ENCODE measurements at regions of chr3 and their contacts with region 1.

Region 1: GRCh38 chr3:182490596-182491491 is 302.5 kb upstream of the ATP11B start:
- DNase-seq: peak; percentile 62
- H3K4me3 Mint-ChIP-seq: no peak overlapping the region
- H3K27ac Mint-ChIP-seq: no peak overlapping the region
- H3K4me1 Mint-ChIP-seq: no peaks in the 10 kb centered on the region
- H3K27me3 Mint-ChIP-seq: no peaks in the 10 kb centered on the region
- CTCF ChIP-seq: peak; percentile 36

Region 2: DNA sequence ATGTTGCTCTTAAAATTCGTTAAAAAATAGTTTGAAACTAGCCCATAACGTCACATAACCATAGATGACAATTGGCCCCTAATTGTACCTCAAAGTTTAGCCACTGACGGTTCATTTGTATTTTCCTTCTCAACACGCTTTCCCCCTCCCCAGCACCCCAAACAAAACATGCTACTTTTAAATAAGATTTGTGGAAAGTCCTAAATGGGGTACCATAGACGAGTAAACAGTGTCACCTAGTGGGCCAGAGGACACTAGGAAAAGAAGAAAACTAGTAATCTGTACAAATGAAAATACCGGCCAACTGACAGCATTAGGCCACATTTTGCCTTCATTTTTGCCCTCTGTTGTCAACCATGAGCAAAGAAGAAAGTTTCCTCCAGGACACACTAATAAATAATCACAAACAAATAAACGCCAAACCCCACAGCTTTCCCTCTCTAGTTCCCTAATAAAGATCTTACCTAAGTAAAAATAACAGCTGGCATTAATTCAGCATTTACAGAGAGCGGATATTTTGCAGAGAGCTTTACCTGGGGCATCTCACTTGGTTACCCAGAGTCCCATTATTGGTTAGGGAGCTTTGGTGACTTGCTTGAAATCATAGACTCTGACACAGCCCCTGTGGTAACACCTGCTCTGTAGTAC is 127.4 kb after region 1 on chr3:
- CTCF ChIA-PET with region 1: interaction called, 3 read pairs
- POLR2A ChIA-PET with region 1: no interaction called
- intact Hi-C with region 1: loop called (anchors 5 kb)
- DNase-seq: peak; percentile 47
- H3K4me3 Mint-ChIP-seq: no peak overlapping the region
- H3K27ac Mint-ChIP-seq: peak overlapping the region; percentile 15
- H3K4me1 Mint-ChIP-seq: peaks cover 30% of the 10 kb centered on the region
- H3K27me3 Mint-ChIP-seq: no peaks in the 10 kb centered on the region
- CTCF ChIP-seq: peak; percentile 51

Measured in MCF 10A (cell line).